HCT116 (cell line): ENCODE measurements at regions of chr18 and their contacts with region 1.

Region 1: GRCh38 chr18:35143622-35144596 is 96.9 kb upstream of the ZNF397 start:
- DNase-seq: peak; percentile 32
- ATAC-seq: peak; percentile 96
- H3K4me3 ChIP-seq: no peak overlapping the region
- H3K27ac ChIP-seq: no peak overlapping the region
- H3K4me1 ChIP-seq: no peaks in the 10 kb centered on the region
- H3K27me3 ChIP-seq: no peaks in the 10 kb centered on the region
- CTCF ChIP-seq: peak; percentile 77 to 81 (median 78); a peak in 5 of 6 replicates
- POLR2A ChIP-seq: no peak
- RAD21 ChIP-seq: peak; percentile 82

Region 2: GRCh38 chr18:34723143-34723542 is 420.8 kb before region 1 on chr18:
- CTCF ChIA-PET with region 1: no interaction called
- POLR2A ChIA-PET with region 1: no interaction called
- RAD21 ChIA-PET with region 1: no interaction called
- intact Hi-C with region 1: no loop called
- DNase-seq: no peak
- ATAC-seq: no peak
- H3K4me3 ChIP-seq: no peak overlapping the region
- H3K27ac ChIP-seq: no peak overlapping the region
- H3K4me1 ChIP-seq: no peaks in the 10 kb centered on the region
- H3K27me3 ChIP-seq: no peaks in the 10 kb centered on the region
- CTCF ChIP-seq: no peak
- POLR2A ChIP-seq: no peak
- RAD21 ChIP-seq: 0 out of 2 replicates have a peak, but pooled peaks have one; percentile 15

Region 3: GRCh38 chr18:34867520-34867919 is 276.4 kb before region 1 on chr18:
- CTCF ChIA-PET with region 1: interaction called, 19 read pairs
- POLR2A ChIA-PET with region 1: no interaction called
- RAD21 ChIA-PET with region 1: interaction called in 1 of 2 experiments, 3 read pairs
- intact Hi-C with region 1: loop called (anchors 2 kb)
- DNase-seq: peak; percentile 18
- ATAC-seq: peak; percentile 86
- H3K4me3 ChIP-seq: no peak overlapping the region
- H3K27ac ChIP-seq: no peak overlapping the region
- H3K4me1 ChIP-seq: no peaks in the 10 kb centered on the region
- H3K27me3 ChIP-seq: no peaks in the 10 kb centered on the region
- CTCF ChIP-seq: peak in 2 of 3 experiments; percentile 47 to 63; a peak in 4 of 6 replicates
- POLR2A ChIP-seq: no peak
- RAD21 ChIP-seq: peak; percentile 28; the same call in 1 of the 2 replicates

Region 4: DNA sequence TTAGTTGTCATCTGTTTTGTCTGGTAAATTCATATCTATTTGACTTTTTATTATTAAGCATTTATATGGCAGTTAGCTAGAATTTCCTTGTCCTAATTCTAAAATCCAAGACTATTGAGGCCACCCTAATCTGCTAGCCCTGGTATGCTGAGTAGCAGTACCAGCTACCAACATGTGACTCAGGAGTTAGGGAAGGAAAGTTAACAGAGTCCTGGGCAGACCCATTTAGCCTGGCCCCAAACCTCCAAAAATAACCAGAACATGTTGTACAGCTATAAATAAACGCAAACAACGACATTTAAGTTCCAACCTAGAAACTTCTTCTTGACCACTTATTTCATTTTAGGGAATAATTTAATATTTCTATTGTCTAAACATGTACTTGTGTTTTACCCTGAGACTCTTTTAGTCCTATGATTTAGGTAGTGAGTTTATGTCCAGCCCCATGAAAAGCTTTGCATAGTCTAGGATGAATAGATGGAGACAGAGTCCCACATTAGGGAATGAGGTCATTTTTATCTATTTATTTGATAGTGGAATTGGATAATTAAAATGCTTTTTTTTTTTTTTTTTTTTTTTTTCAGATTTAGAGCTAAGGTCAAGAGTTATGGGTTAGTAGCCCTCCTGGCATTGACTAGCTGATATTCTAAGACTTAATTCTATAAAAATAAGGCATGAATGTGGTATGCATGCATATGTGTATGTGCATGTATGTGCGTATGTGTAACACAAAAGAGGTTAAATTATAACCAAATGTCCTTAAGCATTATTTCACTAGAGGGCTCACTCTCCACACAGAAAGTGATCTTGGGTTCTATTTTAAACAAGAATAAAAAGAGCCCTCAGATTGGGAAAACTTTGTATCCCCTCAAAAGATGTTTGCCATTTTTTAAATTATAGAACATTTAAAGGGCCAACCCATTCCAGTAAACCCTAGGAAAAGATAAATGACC is 262.8 kb before region 1 on chr18:
- CTCF ChIA-PET with region 1: no interaction called
- POLR2A ChIA-PET with region 1: no interaction called
- RAD21 ChIA-PET with region 1: no interaction called
- intact Hi-C with region 1: loop called (anchors 1 kb)
- DNase-seq: no peak
- ATAC-seq: no peak
- H3K4me3 ChIP-seq: no peak overlapping the region
- H3K27ac ChIP-seq: no peak overlapping the region
- H3K4me1 ChIP-seq: no peaks in the 10 kb centered on the region
- H3K27me3 ChIP-seq: no peaks in the 10 kb centered on the region
- CTCF ChIP-seq: peak in 2 of 3 experiments; percentile 28 to 34; a peak in 2 of 6 replicates
- POLR2A ChIP-seq: no peak
- RAD21 ChIP-seq: peak; percentile 50

Region 5: GRCh38 chr18:34942975-34943374 is 200.9 kb before region 1 on chr18:
- CTCF ChIA-PET with region 1: no interaction called
- POLR2A ChIA-PET with region 1: no interaction called
- RAD21 ChIA-PET with region 1: no interaction called
- intact Hi-C with region 1: loop called (anchors 5 kb)
- DNase-seq: no peak
- ATAC-seq: peak; percentile 58
- H3K4me3 ChIP-seq: no peak overlapping the region
- H3K27ac ChIP-seq: no peak overlapping the region
- H3K4me1 ChIP-seq: 0 out of 4 replicates have a peak, but pooled peaks cover 0 to 7% of the 10 kb centered on the region in 2 experiments
- H3K27me3 ChIP-seq: no peaks in the 10 kb centered on the region
- CTCF ChIP-seq: peak in 2 of 3 experiments; percentile 9 to 17; a peak in 1 of 6 replicates
- POLR2A ChIP-seq: no peak
- RAD21 ChIP-seq: peak; percentile 48; the same call in 1 of the 2 replicates

Region 6: GRCh38 chr18:35005963-35006577 is 137.8 kb before region 1 on chr18:
- CTCF ChIA-PET with region 1: interaction called, 51 read pairs
- POLR2A ChIA-PET with region 1: no interaction called
- RAD21 ChIA-PET with region 1: interaction called, 6 to 11 read pairs
- intact Hi-C with region 1: loop called (anchors 1 kb)
- DNase-seq: peak; percentile 71
- ATAC-seq: peak; percentile 97
- H3K4me3 ChIP-seq: no peak overlapping the region
- H3K27ac ChIP-seq: no peak overlapping the region
- H3K4me1 ChIP-seq: peaks cover 0 to 5% of the 10 kb centered on the region in 2 experiments; a peak in 1 of 4 replicates
- H3K27me3 ChIP-seq: no peaks in the 10 kb centered on the region
- CTCF ChIP-seq: peak; percentile 55 to 73 (median 66)
- POLR2A ChIP-seq: no peak
- RAD21 ChIP-seq: peak; percentile 82